WTC11 (cell line): ENCODE measurements at regions of chr12 and their contacts with region 1.

Region 1: DNA sequence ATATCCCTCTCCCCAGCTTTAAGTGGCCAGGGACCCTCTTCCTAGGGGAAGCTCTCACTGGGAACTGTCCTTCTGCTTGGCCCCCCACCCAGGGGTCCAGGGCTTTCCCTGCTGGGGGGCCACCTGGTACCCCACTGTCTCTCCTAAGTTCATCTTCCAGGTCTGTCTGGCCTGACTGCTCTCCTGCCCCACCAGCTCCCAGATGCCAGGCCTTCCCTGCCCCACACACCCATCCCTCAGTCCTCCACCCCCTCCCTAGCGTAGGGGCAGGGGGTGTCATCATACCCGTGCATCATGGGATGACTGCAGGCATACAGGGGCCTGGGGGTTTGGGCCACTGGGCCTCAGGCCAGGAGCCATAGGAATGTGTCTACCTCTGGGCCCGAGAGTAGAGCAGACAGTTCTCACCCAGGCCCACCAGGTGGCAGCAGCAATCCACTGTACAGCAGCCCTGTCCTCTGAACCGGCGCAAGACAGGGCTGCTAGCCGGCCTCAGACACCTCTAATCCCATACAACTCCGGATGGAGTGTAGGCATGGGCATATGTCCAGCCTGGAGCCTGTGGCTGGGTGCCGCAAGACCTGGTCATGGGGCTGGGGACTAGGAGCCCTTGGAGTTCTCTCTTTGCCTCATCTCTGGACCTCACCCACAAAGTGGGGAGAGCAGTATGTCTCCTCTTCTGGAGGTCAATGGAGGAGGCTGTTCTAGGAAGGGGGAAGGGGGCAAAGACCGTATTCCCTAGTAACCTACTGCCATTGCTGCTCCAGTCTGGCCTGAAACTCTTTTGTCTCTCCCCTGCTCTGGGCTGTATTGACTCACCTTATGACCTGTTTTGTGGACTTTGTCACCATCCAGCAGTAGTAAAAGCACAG is 10.0 kb upstream of the SMARCD1 start:
- DNase-seq: peak; percentile 93
- ATAC-seq: peak; percentile 93
- H3K4me3 Mint-ChIP-seq: no peak overlapping the region
- H3K27ac Mint-ChIP-seq: peak overlapping the region; percentile 72; the same call in 1 of the 2 replicates
- H3K4me1 Mint-ChIP-seq: peaks cover 18% of the 10 kb centered on the region
- H3K27me3 Mint-ChIP-seq: peaks cover 8% of the 10 kb centered on the region
- CTCF ChIP-seq: peak; percentile 84

Region 2: GRCh38 chr12:49866859-49867579 is 208.2 kb before region 1 on chr12:
- CTCF ChIA-PET with region 1: interaction called, 26 read pairs
- POLR2A ChIA-PET with region 1: no interaction called
- DNase-seq: peak; percentile 90
- ATAC-seq: peak; percentile 94
- H3K4me3 Mint-ChIP-seq: no peak overlapping the region
- H3K27ac Mint-ChIP-seq: no peak overlapping the region
- H3K4me1 Mint-ChIP-seq: peaks cover 9% of the 10 kb centered on the region
- H3K27me3 Mint-ChIP-seq: peaks cover 10% of the 10 kb centered on the region
- CTCF ChIP-seq: peak; percentile 96

Region 3: DNA sequence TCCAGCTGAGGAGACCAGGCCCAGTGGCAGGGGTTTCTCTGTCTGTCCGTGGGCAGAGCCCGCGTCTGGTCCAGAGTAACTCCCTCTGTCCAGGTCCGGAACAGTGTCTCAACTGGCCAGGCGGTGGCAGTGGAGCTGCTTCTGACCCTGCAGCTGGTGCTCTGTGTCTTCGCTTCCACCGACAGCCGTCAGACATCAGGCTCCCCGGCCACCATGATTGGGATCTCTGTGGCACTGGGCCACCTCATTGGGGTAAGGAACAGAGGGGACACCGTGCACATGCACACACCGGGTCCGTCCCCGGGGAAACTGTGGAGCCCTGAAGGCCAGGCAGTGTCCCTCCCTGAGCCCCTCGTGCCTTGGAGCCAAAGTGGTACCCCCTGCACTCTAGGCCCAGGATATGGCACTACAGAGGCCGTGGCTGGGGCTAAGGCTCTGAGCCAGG is 100.9 kb before region 1 on chr12:
- CTCF ChIA-PET with region 1: interaction called, 219 read pairs
- POLR2A ChIA-PET with region 1: no interaction called
- DNase-seq: no peak
- ATAC-seq: peak; percentile 71
- H3K4me3 Mint-ChIP-seq: no peak overlapping the region
- H3K27ac Mint-ChIP-seq: no peak overlapping the region
- H3K4me1 Mint-ChIP-seq: peaks cover 13% of the 10 kb centered on the region
- H3K27me3 Mint-ChIP-seq: no peaks in the 10 kb centered on the region
- CTCF ChIP-seq: no peak

Region 4: GRCh38 chr12:50032639-50033581 is 42.3 kb before region 1 on chr12:
- CTCF ChIA-PET with region 1: interaction called, 141 read pairs
- POLR2A ChIA-PET with region 1: no interaction called
- DNase-seq: peak; percentile 53
- ATAC-seq: peak; percentile 78
- H3K4me3 Mint-ChIP-seq: peak overlapping the region; percentile 78
- H3K27ac Mint-ChIP-seq: no peak overlapping the region
- H3K4me1 Mint-ChIP-seq: peaks cover 3% of the 10 kb centered on the region
- H3K27me3 Mint-ChIP-seq: no peaks in the 10 kb centered on the region; the same call in 1 of the 2 replicates
- CTCF ChIP-seq: no peak

Region 5: DNA sequence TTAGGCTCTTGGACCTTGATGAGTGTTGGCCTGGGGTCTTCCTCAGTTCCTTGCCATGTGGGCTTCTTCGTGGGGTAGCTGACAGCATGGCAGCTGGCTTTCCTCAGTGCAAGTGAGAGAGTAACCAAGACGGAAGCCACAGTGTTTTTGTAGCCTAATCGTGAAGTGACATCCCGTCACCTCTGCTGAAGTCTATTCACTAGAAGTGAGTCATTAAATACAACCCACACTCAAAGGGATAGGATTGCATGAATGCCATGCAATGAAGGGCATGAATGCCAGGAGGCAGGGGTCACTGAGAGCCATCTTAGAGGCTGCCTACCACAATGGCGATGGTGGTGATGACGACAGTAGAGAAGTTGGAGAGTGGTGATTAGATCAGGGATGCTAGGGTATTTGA is 31.3 kb before region 1 on chr12:
- CTCF ChIA-PET with region 1: interaction called, 141 read pairs
- POLR2A ChIA-PET with region 1: no interaction called
- DNase-seq: no peak
- ATAC-seq: no peak
- H3K4me3 Mint-ChIP-seq: no peak overlapping the region
- H3K27ac Mint-ChIP-seq: no peak overlapping the region
- H3K4me1 Mint-ChIP-seq: peaks cover 3% of the 10 kb centered on the region; the same call in 1 of the 2 replicates
- H3K27me3 Mint-ChIP-seq: peaks cover 36% of the 10 kb centered on the region
- CTCF ChIP-seq: no peak

Region 6: DNA sequence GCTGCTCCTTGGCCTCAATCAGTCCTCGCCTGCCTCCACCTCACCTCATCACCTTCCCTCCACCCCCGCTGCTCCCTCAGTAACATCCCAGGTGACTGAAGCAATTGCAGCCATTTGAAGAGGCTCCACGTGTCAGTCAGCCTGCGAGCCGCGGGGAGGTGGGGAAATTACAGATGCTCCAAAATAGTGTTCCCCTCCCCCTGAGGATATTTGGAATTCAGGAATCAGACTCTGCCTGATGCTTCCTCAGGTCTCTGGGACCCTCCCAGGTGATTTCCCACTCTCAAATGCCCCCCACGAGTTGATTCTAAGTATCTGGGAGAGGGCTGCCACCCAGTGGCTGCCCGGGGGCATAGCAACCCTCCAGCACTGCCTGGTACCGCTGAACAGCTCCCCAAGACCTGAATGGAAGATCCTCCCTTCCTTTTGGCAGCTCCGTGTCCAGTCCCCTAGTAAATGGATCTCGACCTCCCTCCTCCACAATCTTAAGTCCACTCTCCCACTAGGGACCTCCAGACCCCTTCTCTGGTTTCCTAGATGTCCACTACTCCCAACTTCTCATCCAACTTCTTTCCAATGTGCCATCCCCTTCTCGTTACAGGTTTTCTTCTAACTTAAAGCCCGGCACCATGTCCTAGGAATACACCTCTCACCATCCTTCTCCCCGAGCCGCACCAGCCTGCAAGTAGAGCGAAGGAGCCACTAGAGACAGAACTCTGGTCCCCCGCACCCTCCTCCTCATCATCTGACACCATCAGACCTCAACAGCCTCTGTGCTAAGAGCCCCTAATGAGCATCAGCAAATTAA is 19.1 kb before region 1 on chr12:
- CTCF ChIA-PET with region 1: interaction called, 77 read pairs
- POLR2A ChIA-PET with region 1: interaction called, 3 read pairs
- DNase-seq: peak; percentile 72
- ATAC-seq: peak; percentile 46
- H3K4me3 Mint-ChIP-seq: peak overlapping the region; percentile 79
- H3K27ac Mint-ChIP-seq: no peak overlapping the region
- H3K4me1 Mint-ChIP-seq: peaks cover 25% of the 10 kb centered on the region
- H3K27me3 Mint-ChIP-seq: peaks cover 95% of the 10 kb centered on the region
- CTCF ChIP-seq: peak; percentile 94

Region 7: DNA sequence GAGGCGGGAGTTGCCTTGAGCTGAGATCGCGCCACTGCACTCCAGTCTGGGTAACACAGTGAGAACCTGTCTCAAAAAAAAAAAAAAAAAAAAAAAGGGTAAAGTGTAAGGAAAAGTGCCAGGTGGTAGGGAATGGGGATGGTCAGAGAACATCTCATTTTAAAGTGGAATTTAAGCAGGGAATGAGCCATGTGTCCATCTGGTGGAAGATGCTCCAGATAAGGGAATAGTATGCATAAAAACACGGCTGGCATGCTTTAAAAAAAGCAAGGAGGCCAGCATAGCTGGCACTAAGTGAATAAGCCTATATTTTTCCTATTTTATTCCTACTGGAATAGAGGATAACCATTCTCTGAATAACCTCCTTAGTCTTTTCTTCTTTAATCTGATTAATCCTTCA is 287.5 kb after region 1 on chr12:
- CTCF ChIA-PET with region 1: no interaction called
- POLR2A ChIA-PET with region 1: no interaction called
- DNase-seq: no peak
- ATAC-seq: no peak
- H3K4me3 Mint-ChIP-seq: no peak overlapping the region
- H3K27ac Mint-ChIP-seq: no peak overlapping the region
- H3K4me1 Mint-ChIP-seq: no peaks in the 10 kb centered on the region
- H3K27me3 Mint-ChIP-seq: no peaks in the 10 kb centered on the region
- CTCF ChIP-seq: no peak